ENCODE measurements at regions of chr15 and their contacts with region 1.

Region 1: GRCh38 chr15:89206908-89207331 is 14.5 kb downstream of the RLBP1 start:
- DNase-seq: peak; percentile 55 to 74
- H3K4me3 ChIP-seq: no peak overlapping the region
- H3K27ac ChIP-seq: no peak overlapping the region
- H3K4me1 ChIP-seq: no peaks in the 10 kb centered on the region
- H3K27me3 ChIP-seq: no peaks in the 10 kb centered on the region
- CTCF ChIP-seq: peak; percentile 96

Region 2: DNA sequence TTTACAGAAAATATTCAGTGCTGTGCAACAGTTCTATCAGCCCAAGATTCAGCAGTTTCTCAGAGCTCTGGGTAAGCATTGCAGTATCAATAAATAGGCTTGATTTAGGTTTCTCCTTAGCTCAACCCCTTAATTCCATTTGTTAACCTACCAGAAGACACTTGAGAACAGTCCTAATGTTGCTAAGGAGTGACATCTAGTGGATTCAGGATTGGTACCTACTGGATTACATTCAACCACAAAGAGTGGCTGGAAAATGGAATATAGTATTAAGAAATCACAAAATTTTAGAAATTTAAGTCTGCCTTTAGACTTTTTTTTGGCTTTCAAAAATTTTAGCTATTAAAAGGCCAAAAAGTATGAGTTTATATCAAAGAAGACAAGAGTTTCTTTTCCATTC is 93.0 kb after region 1 on chr15:
- CTCF ChIA-PET with region 1: interaction called, 3 read pairs
- POLR2A ChIA-PET with region 1: no interaction called
- intact Hi-C with region 1: loop called (anchors 5 kb)
- DNase-seq: no peak
- H3K4me3 ChIP-seq: no peak overlapping the region
- H3K27ac ChIP-seq: no peak overlapping the region
- H3K4me1 ChIP-seq: no peaks in the 10 kb centered on the region
- H3K27me3 ChIP-seq: no peaks in the 10 kb centered on the region
- CTCF ChIP-seq: peak; percentile 38; the same call in 1 of the 2 replicates

Region 3: GRCh38 chr15:89325039-89325803 is 118.3 kb after region 1 on chr15:
- CTCF ChIA-PET with region 1: no interaction called
- POLR2A ChIA-PET with region 1: interaction called, 18 read pairs
- intact Hi-C with region 1: no loop called
- DNase-seq: no peak
- H3K4me3 ChIP-seq: no peak overlapping the region
- H3K27ac ChIP-seq: no peak overlapping the region
- H3K4me1 ChIP-seq: no peaks in the 10 kb centered on the region
- H3K27me3 ChIP-seq: no peaks in the 10 kb centered on the region
- CTCF ChIP-seq: no peak